ENCODE measurements at regions of chr12 and their contacts with region 1.

Region 1: DNA sequence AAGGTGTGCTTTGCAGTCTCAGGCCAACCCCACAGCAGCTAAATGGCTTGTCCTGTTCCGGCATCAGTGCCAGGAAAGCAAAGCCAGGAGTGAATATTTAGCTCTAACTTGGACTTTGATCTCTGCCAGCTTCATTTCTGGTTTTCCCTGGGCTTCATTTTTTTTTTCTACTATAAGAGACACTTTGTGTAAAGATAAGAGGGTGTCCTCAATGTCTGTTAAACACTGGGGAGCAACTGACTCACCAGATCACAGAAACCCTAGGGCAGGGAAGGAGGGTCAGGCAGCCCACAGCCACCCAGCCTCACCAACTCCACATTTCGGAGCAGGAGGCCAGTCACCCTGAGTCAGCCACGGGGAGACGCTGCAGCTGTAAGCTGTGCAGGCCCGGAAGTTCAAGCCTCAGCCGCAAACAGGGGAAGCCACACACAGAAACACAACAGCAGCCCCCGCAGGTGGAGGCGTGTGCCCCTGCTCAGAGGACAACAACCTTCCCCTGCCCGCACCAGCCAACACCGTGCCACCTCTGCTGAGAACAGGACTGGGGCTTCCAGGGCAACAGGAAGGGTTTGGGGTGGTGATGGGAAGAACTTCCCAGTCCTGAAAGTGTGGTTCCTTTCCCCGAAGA is 6.3 kb downstream of the TNFRSF1A start:
- DNase-seq: peak; percentile 77 to 92 (median 86)
- H3K4me3 ChIP-seq: peak overlapping the region; percentile 91
- H3K4me3 Mint-ChIP-seq: no peak overlapping the region
- H3K27ac ChIP-seq: peak overlapping the region; percentile 80
- H3K27ac Mint-ChIP-seq: peak overlapping the region in 1 of 8 donors; percentile 79
- H3K4me1 ChIP-seq: peaks cover 80% of the 10 kb centered on the region
- H3K4me1 Mint-ChIP-seq: peaks cover 11 to 49% (median 45%) of the 10 kb centered on the region in 3 donors
- H3K27me3 ChIP-seq: no peaks in the 10 kb centered on the region
- H3K27me3 Mint-ChIP-seq: peaks cover 0 to 4% of the 10 kb centered on the region in 2 donors

Region 2: GRCh38 chr12:6323340-6323994 is 12.1 kb before region 1 on chr12:
- CTCF ChIA-PET with region 1: interaction called, 43 read pairs
- POLR2A ChIA-PET with region 1: interaction called, 22 read pairs
- DNase-seq: peak in 4 of 5 donors; percentile 28 to 67 (median 52)
- H3K4me3 ChIP-seq: peak overlapping the region; percentile 22
- H3K4me3 Mint-ChIP-seq: peak overlapping the region; percentile 63 to 88 (median 83)
- H3K27ac ChIP-seq: no peak overlapping the region
- H3K27ac Mint-ChIP-seq: peak overlapping the region; percentile 81 to 96 (median 93)
- H3K4me1 ChIP-seq: peaks cover 34% of the 10 kb centered on the region
- H3K4me1 Mint-ChIP-seq: peaks cover 50 to 58% (median 55%) of the 10 kb centered on the region in 3 donors
- H3K27me3 ChIP-seq: no peaks in the 10 kb centered on the region
- H3K27me3 Mint-ChIP-seq: no peaks in the 10 kb centered on the region

Region 3: DNA sequence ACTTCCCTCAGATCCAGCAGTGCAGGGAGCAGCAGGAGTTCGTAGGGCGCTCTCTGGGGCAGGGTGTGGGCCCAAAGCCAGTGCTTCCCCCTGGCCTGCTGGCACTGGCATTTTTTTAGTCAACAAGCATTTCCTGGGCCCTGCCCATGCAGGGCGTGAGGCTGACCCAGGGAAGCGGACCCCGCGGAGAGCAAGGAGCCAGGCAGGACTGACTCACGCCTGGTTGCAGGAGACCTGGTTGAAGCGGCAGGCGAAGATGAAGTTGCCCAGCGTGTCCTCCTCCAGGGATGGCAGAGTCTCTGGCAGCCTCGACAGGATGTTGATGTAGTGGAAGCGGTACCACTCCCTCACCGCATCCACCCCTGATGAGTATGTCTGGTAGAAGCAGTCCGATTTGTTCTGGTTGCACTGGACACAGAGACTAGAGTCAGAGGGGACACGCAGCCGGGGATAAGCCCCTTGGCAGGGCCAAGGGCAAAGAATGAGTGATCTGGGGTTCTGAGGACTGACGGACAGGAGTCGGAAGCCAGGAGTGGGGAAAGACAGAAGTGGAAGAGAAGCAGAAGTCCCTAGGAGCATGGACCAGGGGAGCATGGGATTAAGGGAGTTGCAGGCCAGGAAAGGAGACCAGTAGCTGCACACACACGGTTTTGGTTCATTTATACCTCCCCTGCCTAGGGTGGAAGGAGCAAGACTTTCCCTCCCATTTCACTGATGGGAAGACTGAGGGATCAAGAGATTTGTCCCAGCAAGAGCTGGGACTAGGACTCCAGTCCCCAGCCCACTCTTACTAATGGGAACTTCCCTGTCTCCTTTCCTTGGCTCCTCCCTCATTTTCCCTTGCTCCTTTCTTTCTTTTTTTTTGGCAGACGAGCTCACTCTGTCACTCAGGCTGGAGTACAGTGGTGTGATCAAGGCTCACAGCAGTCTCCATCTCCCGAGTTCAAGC is 26.5 kb after region 1 on chr12:
- CTCF ChIA-PET with region 1: interaction called, 106 read pairs
- POLR2A ChIA-PET with region 1: interaction called, 34 read pairs
- DNase-seq: no peak
- H3K4me3 ChIP-seq: no peak overlapping the region
- H3K4me3 Mint-ChIP-seq: peak overlapping the region in 5 of 7 donors; percentile 14 to 35 (median 21)
- H3K27ac ChIP-seq: no peak overlapping the region
- H3K27ac Mint-ChIP-seq: peak overlapping the region in 3 of 8 donors; percentile 74 to 88 (median 87)
- H3K4me1 ChIP-seq: peaks cover 17% of the 10 kb centered on the region
- H3K4me1 Mint-ChIP-seq: peaks cover 13 to 15% (median 14%) of the 10 kb centered on the region in 3 donors
- H3K27me3 ChIP-seq: no peaks in the 10 kb centered on the region
- H3K27me3 Mint-ChIP-seq: no peaks in the 10 kb centered on the region

Region 4: GRCh38 chr12:6367065-6367968 is 31.8 kb after region 1 on chr12:
- CTCF ChIA-PET with region 1: interaction called, 106 read pairs
- POLR2A ChIA-PET with region 1: interaction called, 34 read pairs
- DNase-seq: peak in 4 of 5 donors; percentile 14 to 73 (median 54)
- H3K4me3 ChIP-seq: no peak overlapping the region
- H3K4me3 Mint-ChIP-seq: peak overlapping the region in 1 of 7 donors; percentile 47
- H3K27ac ChIP-seq: no peak overlapping the region
- H3K27ac Mint-ChIP-seq: peak overlapping the region; percentile 34 to 80 (median 70)
- H3K4me1 ChIP-seq: peaks cover 21% of the 10 kb centered on the region
- H3K4me1 Mint-ChIP-seq: peaks cover 18 to 36% (median 27%) of the 10 kb centered on the region in 3 donors
- H3K27me3 ChIP-seq: no peaks in the 10 kb centered on the region
- H3K27me3 Mint-ChIP-seq: peaks cover 0 to 2% of the 10 kb centered on the region in 2 donors

Region 5: DNA sequence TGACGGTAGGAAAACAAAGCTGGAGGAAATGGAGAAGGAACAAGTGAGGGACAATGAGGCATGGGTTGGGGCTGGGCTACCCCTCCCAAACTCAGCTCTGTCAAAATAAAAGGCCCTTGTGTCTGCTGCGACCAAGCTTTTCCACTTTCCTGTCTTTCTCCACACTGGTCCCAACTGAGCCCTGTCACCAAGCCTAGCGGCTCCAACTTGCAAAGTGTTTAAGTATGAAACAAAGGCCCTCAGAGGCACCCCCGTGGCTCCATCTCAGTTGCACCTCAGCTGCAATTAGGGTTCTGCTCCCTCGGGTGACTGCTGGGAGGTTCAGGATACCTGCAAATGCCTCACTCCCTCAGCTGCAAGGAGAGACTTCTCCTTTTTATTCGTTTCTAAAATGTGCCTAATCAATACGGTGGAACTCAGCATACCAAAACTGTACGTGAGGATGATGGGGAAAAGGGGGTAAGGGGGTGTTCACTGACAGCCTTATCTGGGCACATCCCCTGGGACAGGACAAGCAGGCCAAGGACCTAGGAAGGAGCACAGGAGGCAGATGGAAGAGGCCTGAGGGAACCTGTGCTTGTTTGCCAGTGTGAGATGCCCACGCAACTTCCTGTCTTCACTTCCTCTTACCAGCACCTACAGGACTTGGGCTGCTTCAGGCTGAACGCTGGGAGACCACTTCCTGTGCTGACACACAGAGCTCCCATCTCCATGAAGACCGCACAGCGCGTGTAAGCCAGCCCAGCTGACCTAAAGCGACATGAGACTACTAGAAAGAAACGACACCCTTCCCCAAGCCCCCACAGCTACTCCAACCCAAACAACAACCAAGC is 126.1 kb after region 1 on chr12:
- CTCF ChIA-PET with region 1: interaction called, 25 read pairs
- POLR2A ChIA-PET with region 1: interaction called, 6 read pairs
- DNase-seq: peak; percentile 74 to 93 (median 87)
- H3K4me3 ChIP-seq: peak overlapping the region; percentile 46
- H3K4me3 Mint-ChIP-seq: peak overlapping the region; percentile 71 to 89 (median 83)
- H3K27ac ChIP-seq: peak overlapping the region; percentile 79
- H3K27ac Mint-ChIP-seq: peak overlapping the region; percentile 94 to 99 (median 99)
- H3K4me1 ChIP-seq: peaks cover 88% of the 10 kb centered on the region
- H3K4me1 Mint-ChIP-seq: peaks cover 75 to 89% (median 83%) of the 10 kb centered on the region in 3 donors
- H3K27me3 ChIP-seq: no peaks in the 10 kb centered on the region
- H3K27me3 Mint-ChIP-seq: peaks cover 0 to 2% of the 10 kb centered on the region in 2 donors

Region 6: DNA sequence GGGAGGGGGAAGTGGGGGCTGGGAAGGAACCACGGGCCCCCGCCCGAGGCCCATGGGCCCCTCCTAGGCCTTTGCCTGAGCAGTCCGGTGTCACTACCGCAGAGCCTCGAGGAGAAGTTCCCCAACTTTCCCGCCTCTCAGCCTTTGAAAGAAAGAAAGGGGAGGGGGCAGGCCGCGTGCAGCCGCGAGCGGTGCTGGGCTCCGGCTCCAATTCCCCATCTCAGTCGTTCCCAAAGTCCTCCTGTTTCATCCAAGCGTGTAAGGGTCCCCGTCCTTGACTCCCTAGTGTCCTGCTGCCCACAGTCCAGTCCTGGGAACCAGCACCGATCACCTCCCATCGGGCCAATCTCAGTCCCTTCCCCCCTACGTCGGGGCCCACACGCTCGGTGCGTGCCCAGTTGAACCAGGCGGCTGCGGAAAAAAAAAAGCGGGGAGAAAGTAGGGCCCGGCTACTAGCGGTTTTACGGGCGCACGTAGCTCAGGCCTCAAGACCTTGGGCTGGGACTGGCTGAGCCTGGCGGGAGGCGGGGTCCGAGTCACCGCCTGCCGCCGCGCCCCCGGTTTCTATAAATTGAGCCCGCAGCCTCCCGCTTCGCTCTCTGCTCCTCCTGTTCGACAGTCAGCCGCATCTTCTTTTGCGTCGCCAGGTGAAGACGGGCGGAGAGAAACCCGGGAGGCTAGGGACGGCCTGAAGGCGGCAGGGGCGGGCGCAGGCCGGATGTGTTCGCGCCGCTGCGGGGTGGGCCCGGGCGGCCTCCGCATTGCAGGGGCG is 198.5 kb after region 1 on chr12 and contains the start of gene GAPDH:
- CTCF ChIA-PET with region 1: interaction called, 36 read pairs
- POLR2A ChIA-PET with region 1: interaction called, 12 read pairs
- DNase-seq: peak; percentile 78 to 93 (median 86)
- H3K4me3 ChIP-seq: peak within 1 kb of the TSS; percentile 92
- H3K4me3 Mint-ChIP-seq: peak within 1 kb of the TSS; percentile 89 to 97 (median 93)
- H3K27ac ChIP-seq: peak within 1 kb of the TSS; percentile 95
- H3K27ac Mint-ChIP-seq: peak within 1 kb of the TSS; percentile 96 to 99 (median 98)
- H3K4me1 ChIP-seq: peaks cover 59% of the 10 kb centered on the region
- H3K4me1 Mint-ChIP-seq: peaks cover 49 to 57% (median 52%) of the 10 kb centered on the region in 3 donors
- H3K27me3 ChIP-seq: no peaks in the 10 kb centered on the region
- H3K27me3 Mint-ChIP-seq: peaks cover 0 to 5% of the 10 kb centered on the region in 2 donors
- total RNA-seq, gene GAPDH: 7,182 to 7,238 TPM

Region 7: GRCh38 chr12:6540181-6540877 is 204.8 kb after region 1 on chr12:
- CTCF ChIA-PET with region 1: interaction called, 36 read pairs
- POLR2A ChIA-PET with region 1: interaction called, 12 read pairs
- DNase-seq: peak; percentile 21 to 63 (median 33)
- H3K4me3 ChIP-seq: no peak overlapping the region
- H3K4me3 Mint-ChIP-seq: peak overlapping the region in 6 of 7 donors; percentile 16 to 73 (median 66)
- H3K27ac ChIP-seq: no peak overlapping the region
- H3K27ac Mint-ChIP-seq: peak overlapping the region in 7 of 8 donors; percentile 12 to 95 (median 77)
- H3K4me1 ChIP-seq: peaks cover 62% of the 10 kb centered on the region
- H3K4me1 Mint-ChIP-seq: peaks cover 40 to 48% (median 47%) of the 10 kb centered on the region in 3 donors
- H3K27me3 ChIP-seq: no peaks in the 10 kb centered on the region
- H3K27me3 Mint-ChIP-seq: peaks cover 0 to 1% of the 10 kb centered on the region in 2 donors

Measured in CD8-positive, alpha-beta memory T cell (primary cell).